CD4-positive, alpha-beta memory T cell (primary cell): ENCODE measurements at regions of chr17 and their contacts with region 1.

Region 1: DNA sequence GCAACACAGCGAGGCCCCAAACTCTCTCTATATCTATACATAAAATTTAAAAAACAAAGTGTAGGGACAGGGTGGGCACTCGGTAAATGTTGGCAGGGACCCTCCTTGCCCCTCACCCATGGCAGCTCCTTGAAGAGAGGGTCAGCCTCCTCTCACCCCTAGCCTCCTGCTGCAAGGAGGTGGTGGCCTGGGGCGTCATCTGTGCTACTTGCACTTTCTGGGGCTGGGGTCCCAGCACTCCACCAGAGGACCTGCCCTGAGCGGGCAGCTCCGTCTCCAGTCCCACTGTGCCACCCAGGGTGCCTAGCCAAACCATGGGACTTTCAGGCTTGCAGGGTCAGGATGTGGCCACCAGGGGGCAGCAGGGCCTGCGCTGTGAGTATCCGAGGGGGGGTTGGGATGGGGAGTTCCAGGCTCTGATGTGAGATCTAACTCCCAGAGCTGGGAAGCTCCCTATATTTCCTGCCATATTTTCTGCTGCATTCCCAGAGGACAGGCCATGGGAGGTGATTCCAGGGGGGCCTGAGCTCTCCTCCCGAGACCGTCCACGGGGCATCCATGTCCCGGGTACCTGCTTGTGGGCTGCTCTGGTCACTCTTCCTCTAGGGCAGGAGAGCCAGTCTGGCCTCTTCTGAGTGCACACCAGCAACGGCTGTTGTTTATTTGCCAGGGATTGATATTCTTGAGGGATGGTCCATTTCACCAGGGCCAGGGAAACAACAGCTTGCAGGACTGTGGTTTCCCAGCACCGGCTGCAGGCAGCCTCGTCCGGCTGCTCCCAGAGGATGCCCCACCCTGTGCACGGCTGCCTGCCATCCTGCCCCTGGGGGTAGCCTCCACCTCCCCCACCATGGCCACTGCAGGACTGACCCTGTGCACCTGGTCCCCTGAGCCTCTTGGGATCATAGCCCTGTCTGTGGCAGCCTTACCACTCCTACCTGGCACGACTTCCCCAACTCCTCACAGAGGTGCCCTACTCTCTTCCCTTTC is 1.1 kb downstream of the GPR142 start:
- DNase-seq: peak; percentile 53 to 72 (median 60)
- H3K4me3 ChIP-seq: no peak overlapping the region
- H3K4me3 Mint-ChIP-seq: peak overlapping the region; percentile 21 to 82 (median 66)
- H3K27ac ChIP-seq: no peak overlapping the region
- H3K27ac Mint-ChIP-seq: peak overlapping the region in 1 of 7 donors; percentile 53
- H3K4me1 ChIP-seq: peaks cover 16% of the 10 kb centered on the region
- H3K4me1 Mint-ChIP-seq: peaks cover 7 to 17% (median 12%) of the 10 kb centered on the region in 4 donors
- H3K27me3 ChIP-seq: no peaks in the 10 kb centered on the region
- H3K27me3 Mint-ChIP-seq: peaks cover 3 to 4% of the 10 kb centered on the region in 2 donors

Region 2: DNA sequence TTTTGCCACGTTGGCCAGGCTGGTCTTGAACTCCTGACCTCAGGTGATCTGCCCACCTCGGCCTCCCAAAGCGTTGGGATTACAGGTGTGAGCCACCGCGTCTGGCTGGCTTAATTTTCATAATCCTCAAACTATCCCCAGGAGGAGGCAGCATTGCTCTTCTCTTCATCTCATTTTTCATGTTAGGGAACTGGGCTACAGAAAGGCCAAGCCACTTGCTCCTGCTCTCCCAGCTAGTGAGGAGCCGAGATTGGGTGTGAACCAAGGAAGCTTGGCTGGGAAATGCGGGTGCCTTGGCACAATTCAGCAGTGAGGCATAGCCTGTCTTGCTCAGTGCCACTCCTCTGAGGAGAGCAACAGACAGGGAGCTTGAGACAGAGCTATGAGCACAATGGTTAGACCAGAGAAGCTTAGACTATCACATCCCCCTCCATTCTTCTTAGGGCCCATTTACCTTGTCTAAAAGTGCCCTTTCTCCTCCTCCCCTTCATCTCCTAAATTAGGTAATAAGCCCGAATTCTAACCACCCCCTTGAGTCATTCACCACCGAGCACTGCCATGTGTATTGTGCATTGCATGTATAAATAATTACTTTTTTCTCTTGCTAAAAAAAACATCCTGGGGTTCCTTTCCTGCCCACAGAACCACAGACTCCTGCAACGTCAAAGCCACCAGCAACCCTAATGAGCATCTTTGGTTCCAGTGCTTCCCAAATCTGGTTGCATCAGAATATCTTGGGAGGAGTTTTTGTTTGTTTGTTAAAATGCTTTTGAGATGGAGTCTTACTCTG is 62.3 kb before region 1 on chr17:
- CTCF ChIA-PET with region 1: interaction called, 62 read pairs
- POLR2A ChIA-PET with region 1: no interaction called
- intact Hi-C with region 1: no loop called
- DNase-seq: no peak
- H3K4me3 ChIP-seq: no peak overlapping the region
- H3K4me3 Mint-ChIP-seq: no peak overlapping the region
- H3K27ac ChIP-seq: no peak overlapping the region
- H3K27ac Mint-ChIP-seq: peak overlapping the region in 2 of 7 donors; percentile 53 to 83
- H3K4me1 ChIP-seq: peaks cover 7% of the 10 kb centered on the region
- H3K4me1 Mint-ChIP-seq: peaks cover 8 to 14% (median 12%) of the 10 kb centered on the region in 4 donors
- H3K27me3 ChIP-seq: no peaks in the 10 kb centered on the region
- H3K27me3 Mint-ChIP-seq: peaks cover 0 to 2% of the 10 kb centered on the region in 2 donors

Region 3: GRCh38 chr17:74379495-74380085 is 11.2 kb after region 1 on chr17:
- CTCF ChIA-PET with region 1: interaction called, 52 read pairs
- POLR2A ChIA-PET with region 1: no interaction called
- intact Hi-C with region 1: no loop called
- DNase-seq: peak; percentile 84 to 88 (median 87)
- H3K4me3 ChIP-seq: no peak overlapping the region
- H3K4me3 Mint-ChIP-seq: peak overlapping the region in 1 of 8 donors; percentile 13
- H3K27ac ChIP-seq: no peak overlapping the region
- H3K27ac Mint-ChIP-seq: no peak overlapping the region
- H3K4me1 ChIP-seq: peaks cover 9% of the 10 kb centered on the region
- H3K4me1 Mint-ChIP-seq: peaks cover 0 to 8% (median under 1%) of the 10 kb centered on the region in 4 donors
- H3K27me3 ChIP-seq: no peaks in the 10 kb centered on the region
- H3K27me3 Mint-ChIP-seq: peaks cover 2 to 4% of the 10 kb centered on the region in 2 donors

Region 4: GRCh38 chr17:74485841-74486240 is 117.5 kb after region 1 on chr17:
- CTCF ChIA-PET with region 1: interaction called, 11 read pairs
- POLR2A ChIA-PET with region 1: interaction called, 3 read pairs
- intact Hi-C with region 1: no loop called
- DNase-seq: no peak
- H3K4me3 ChIP-seq: no peak overlapping the region
- H3K4me3 Mint-ChIP-seq: no peak overlapping the region
- H3K27ac ChIP-seq: no peak overlapping the region
- H3K27ac Mint-ChIP-seq: peak overlapping the region in 2 of 7 donors; percentile 7 to 27
- H3K4me1 ChIP-seq: peaks cover 1% of the 10 kb centered on the region
- H3K4me1 Mint-ChIP-seq: peaks cover 6 to 20% (median 15%) of the 10 kb centered on the region in 4 donors
- H3K27me3 ChIP-seq: no peaks in the 10 kb centered on the region
- H3K27me3 Mint-ChIP-seq: no peaks in the 10 kb centered on the region

Region 5: DNA sequence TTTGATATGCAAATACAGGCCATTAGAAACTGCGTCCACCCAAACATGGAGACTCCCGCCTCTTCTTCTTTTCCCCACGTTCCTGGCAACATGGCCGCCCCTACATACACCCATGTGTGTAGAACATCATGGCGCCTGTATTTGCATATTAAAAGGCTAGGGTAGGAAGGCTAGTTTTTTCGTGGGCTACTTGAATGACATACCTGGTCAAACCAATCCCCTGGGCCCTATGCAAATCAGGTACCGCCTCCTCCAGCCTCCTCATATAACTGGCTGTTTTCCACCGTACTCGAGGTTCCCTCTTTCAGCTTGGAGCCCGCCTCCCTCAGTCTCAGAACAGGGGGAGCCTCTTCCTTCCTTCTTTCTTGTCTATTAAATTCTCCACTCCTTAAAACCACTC is 163.7 kb after region 1 on chr17:
- CTCF ChIA-PET with region 1: interaction called, 11 read pairs
- POLR2A ChIA-PET with region 1: no interaction called
- intact Hi-C with region 1: no loop called
- DNase-seq: no peak
- H3K4me3 ChIP-seq: no peak overlapping the region
- H3K4me3 Mint-ChIP-seq: peak overlapping the region in 1 of 8 donors; percentile 41
- H3K27ac ChIP-seq: no peak overlapping the region
- H3K27ac Mint-ChIP-seq: no peak overlapping the region
- H3K4me1 ChIP-seq: no peaks in the 10 kb centered on the region
- H3K4me1 Mint-ChIP-seq: peaks cover 0 to 5% (median 4%) of the 10 kb centered on the region in 4 donors
- H3K27me3 ChIP-seq: peaks cover 14% of the 10 kb centered on the region
- H3K27me3 Mint-ChIP-seq: peaks cover 18 to 24% of the 10 kb centered on the region in 2 donors